Naive thymus-derived CD4-positive, alpha-beta T cell (primary cell): ENCODE measurements at regions of chr5 and their contacts with region 1.

Region 1: DNA sequence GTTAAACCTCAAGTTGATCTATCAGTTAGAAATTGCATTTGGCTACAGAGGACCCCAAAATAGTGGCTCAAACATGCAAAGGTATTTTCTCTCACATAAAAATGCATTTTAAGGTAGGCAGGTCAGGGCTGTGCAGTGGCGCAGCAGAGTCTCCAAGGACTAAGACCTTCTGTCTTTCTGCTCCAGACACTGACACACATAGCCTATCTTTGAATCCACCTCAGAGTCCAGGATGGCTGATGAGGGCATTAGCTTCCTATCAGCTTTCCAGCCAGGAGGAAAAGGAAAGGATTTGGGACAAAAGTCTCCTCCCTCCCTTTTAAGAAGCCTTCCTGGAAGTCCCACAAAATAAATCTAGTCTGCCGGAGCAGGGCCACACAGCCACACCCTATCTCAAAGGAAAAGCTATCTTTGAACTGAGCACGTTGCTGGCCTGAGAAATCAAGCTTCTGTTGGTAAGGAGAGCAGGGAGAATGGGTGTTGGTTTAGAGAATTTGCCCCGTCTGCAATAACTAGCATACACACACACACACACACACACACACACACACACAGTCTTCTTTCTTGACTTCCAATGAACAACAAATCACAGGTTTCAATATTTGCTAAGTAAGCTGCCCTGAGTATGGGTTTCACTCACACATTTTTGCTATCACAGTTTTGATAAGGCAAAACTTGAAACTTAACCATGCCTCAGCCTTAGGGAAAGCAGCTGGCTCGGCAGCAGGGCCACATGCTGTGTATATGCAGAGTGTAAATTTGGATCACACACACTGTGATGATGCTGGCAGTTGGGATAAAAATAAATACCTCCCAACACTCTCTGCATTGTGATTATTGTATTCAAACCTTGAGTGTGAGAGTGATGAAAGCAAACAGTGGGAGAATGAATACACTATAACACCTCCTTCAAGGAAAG is 116.6 kb upstream of the MAP3K1 start:
- DNase-seq: no peak
- ATAC-seq: no peak
- H3K4me3 ChIP-seq: no peak overlapping the region
- H3K4me3 Mint-ChIP-seq: peak overlapping the region in 8 of 10 donors; percentile 33 to 70 (median 54)
- H3K27ac ChIP-seq: peak overlapping the region; percentile 25
- H3K27ac Mint-ChIP-seq: peak overlapping the region; percentile 4 to 87 (median 69)
- H3K4me1 ChIP-seq: peaks cover 12 to 60% of the 10 kb centered on the region in 2 donors
- H3K4me1 Mint-ChIP-seq: peaks cover 47 to 99% (median 80%) of the 10 kb centered on the region in 7 donors
- H3K27me3 ChIP-seq: no peaks in the 10 kb centered on the region
- H3K27me3 Mint-ChIP-seq: peaks cover 0 to 6% (median 0%) of the 10 kb centered on the region in 5 donors

Region 2: DNA sequence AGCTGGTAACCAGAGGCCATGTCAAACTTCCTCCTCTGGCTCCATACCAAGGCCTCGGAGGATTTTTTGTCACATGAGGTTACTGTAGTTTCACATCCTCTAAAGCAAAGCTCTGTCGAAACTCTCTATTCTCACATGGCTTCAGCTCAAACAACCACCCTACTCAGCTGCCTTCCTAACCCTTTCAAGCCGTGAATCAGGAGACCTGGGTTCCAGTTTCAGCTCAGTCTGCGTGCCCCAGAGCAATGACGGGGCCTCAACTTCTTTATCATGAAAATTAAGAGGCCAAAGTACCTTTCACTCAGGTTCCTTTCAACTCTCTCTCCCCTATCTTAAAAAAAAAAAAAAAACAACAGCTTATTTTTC is 28.6 kb before region 1 on chr5:
- CTCF ChIA-PET with region 1: interaction called, 3 read pairs
- POLR2A ChIA-PET with region 1: interaction called, 3 read pairs
- intact Hi-C with region 1: loop called in 1 of 2 experiments (anchors 5 kb)
- DNase-seq: peak in 7 of 9 donors; percentile 9 to 68 (median 40)
- ATAC-seq: peak; percentile 89
- H3K4me3 ChIP-seq: peak overlapping the region; percentile 13
- H3K4me3 Mint-ChIP-seq: peak overlapping the region; percentile 55 to 83 (median 70)
- H3K27ac ChIP-seq: peak overlapping the region; percentile 65
- H3K27ac Mint-ChIP-seq: peak overlapping the region; percentile 80 to 95 (median 90)
- H3K4me1 ChIP-seq: peaks cover 0 to 40% of the 10 kb centered on the region in 2 donors
- H3K4me1 Mint-ChIP-seq: peaks cover 35 to 53% (median 45%) of the 10 kb centered on the region in 7 donors
- H3K27me3 ChIP-seq: no peaks in the 10 kb centered on the region
- H3K27me3 Mint-ChIP-seq: peaks cover 0 to 10% (median 0%) of the 10 kb centered on the region in 5 donors

Region 3: GRCh38 chr5:56737002-56737621 is 38.4 kb after region 1 on chr5:
- CTCF ChIA-PET with region 1: interaction called, 3 read pairs
- POLR2A ChIA-PET with region 1: interaction called, 4 read pairs
- intact Hi-C with region 1: loop called in 1 of 2 experiments (anchors 5 kb)
- DNase-seq: peak in 1 of 9 donors; percentile 6
- ATAC-seq: peak; percentile 57
- H3K4me3 ChIP-seq: peak overlapping the region; percentile 28
- H3K4me3 Mint-ChIP-seq: peak overlapping the region; percentile 50 to 88 (median 67)
- H3K27ac ChIP-seq: peak overlapping the region; percentile 68
- H3K27ac Mint-ChIP-seq: peak overlapping the region; percentile 74 to 94 (median 89)
- H3K4me1 ChIP-seq: peaks cover 14 to 29% of the 10 kb centered on the region in 2 donors
- H3K4me1 Mint-ChIP-seq: peaks cover 40 to 64% (median 51%) of the 10 kb centered on the region in 7 donors
- H3K27me3 ChIP-seq: no peaks in the 10 kb centered on the region
- H3K27me3 Mint-ChIP-seq: peaks cover 0 to 2% (median 0%) of the 10 kb centered on the region in 5 donors

Region 4: GRCh38 chr5:56845277-56845676 is 146.6 kb after region 1 on chr5:
- CTCF ChIA-PET with region 1: no interaction called
- POLR2A ChIA-PET with region 1: no interaction called
- intact Hi-C with region 1: no loop called
- DNase-seq: peak in 2 of 9 donors; percentile 37 to 38
- ATAC-seq: peak; percentile 47
- H3K4me3 ChIP-seq: no peak overlapping the region
- H3K4me3 Mint-ChIP-seq: peak overlapping the region in 9 of 10 donors; percentile 9 to 71 (median 39)
- H3K27ac ChIP-seq: no peak overlapping the region
- H3K27ac Mint-ChIP-seq: peak overlapping the region in 3 of 9 donors; percentile 2 to 76 (median 63)
- H3K4me1 ChIP-seq: peaks cover 26 to 87% of the 10 kb centered on the region in 2 donors
- H3K4me1 Mint-ChIP-seq: peaks cover 66 to 96% (median 92%) of the 10 kb centered on the region in 7 donors
- H3K27me3 ChIP-seq: no peaks in the 10 kb centered on the region
- H3K27me3 Mint-ChIP-seq: no peaks in the 10 kb centered on the region